ENCODE measurements at regions of chr7 and their contacts with region 1.

Region 1: DNA sequence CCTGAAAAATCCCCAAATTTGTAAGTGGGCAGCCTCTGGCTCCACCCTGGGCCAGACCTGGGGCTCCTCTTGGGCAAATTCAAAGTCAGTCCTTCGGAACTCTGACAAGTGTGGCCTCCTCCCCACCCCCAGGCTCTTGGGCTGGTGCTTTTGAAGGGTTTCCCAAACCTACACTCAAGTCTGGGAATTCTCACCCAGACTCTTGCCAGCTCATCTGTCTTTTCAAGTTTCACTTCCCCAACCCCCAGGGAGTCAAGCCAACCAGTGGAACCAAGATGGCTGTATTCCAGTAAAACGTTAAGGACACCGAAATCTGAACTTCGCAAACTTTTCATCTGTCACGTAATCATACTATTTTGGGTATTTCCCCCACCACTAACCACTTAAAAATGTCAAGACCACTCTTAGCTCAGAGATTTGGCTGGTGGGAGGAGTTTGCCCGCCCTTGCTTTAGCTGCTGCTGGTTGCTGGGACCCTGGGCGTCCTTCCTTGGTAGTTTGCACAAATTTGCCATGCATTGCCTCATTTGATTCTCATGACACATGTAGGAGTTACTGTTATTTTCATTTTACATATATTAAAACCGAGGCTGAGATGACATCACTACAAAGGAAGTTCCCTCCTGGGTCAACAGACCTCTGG is 1.7 kb upstream of the MYO1G start:
- DNase-seq: peak; percentile 94
- ATAC-seq: peak; percentile 48
- H3K4me3 Mint-ChIP-seq: peak overlapping the region; percentile 99
- H3K27ac Mint-ChIP-seq: peak overlapping the region; percentile 99
- H3K4me1 Mint-ChIP-seq: peaks cover 68% of the 10 kb centered on the region
- H3K27me3 Mint-ChIP-seq: no peaks in the 10 kb centered on the region

Region 2: DNA sequence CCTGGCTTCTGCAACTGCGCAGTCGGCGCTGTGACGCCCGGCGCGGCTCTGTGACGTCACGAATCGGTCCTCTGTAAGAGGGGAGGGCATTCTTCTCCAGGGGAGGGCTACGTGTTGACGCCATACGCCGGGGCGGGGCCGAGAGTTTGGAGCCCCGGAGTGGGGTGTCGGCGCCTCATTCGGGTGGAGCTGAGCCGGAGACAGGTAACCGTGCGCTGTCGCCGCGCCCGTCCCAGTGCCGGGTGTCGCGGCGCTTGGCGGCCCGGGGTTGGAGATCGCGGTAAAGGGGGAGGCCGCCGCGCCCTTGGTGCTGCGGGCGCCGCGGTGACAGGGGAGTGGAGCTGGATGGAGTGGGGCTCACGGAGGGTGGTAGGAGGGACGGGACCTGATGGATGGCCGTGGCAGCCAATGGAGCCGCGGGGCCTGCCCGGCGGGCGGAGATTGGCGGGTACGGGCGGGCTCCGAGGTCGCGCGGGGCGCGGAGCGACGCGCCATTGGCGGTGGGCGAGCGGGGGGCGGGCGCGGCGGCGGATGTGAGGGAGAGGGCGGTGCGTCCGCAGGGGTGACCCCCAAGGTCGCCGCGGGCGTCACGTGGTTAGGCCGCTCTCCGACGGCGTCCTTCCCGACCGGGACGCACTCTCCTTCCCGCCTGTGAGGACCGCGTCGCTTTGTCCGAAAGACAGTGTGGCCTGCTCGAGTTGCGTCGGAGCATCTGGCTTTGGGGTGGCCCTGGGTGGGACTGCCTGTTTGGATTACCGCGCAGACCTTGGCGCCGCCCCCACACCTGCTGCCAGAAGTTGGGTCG is 373.9 kb before region 1 on chr7 and contains the start of gene OGDH:
- CTCF ChIA-PET with region 1: no interaction called
- POLR2A ChIA-PET with region 1: no interaction called
- intact Hi-C with region 1: loop called in 1 of 2 experiments (anchors 1 kb)
- DNase-seq: peak; percentile 100
- ATAC-seq: peak; percentile 98
- H3K4me3 Mint-ChIP-seq: peak within 1 kb of the TSS; percentile 92
- H3K27ac Mint-ChIP-seq: peak within 1 kb of the TSS; percentile 97
- H3K4me1 Mint-ChIP-seq: peaks cover 33% of the 10 kb centered on the region
- H3K27me3 Mint-ChIP-seq: no peaks in the 10 kb centered on the region
- total RNA-seq, gene OGDH: 80.3 to 90.1 TPM

Region 3: DNA sequence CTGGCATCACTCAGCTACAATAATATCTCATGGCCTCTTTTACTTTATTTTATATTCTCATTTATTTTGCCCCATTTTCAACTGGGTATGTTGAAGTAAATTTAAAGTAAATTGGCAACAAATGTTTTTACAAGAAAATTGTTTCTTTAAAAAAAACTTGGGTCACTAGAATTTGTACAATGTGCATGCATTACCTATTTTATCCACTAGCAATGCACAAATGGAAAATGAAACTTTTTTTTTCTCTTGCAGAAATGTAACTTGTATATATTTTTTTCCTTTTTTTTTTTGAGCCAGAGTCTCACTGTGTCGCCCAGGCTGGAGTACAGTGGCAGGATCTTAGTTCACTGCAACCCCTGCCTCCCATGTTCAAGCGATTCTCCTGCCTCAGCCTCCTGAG is 122.4 kb before region 1 on chr7:
- CTCF ChIA-PET with region 1: no interaction called
- POLR2A ChIA-PET with region 1: no interaction called
- intact Hi-C with region 1: loop called in 1 of 2 experiments (anchors 1 kb)
- DNase-seq: no peak
- ATAC-seq: no peak
- H3K4me3 Mint-ChIP-seq: no peak overlapping the region
- H3K27ac Mint-ChIP-seq: no peak overlapping the region
- H3K4me1 Mint-ChIP-seq: peaks cover 18% of the 10 kb centered on the region
- H3K27me3 Mint-ChIP-seq: no peaks in the 10 kb centered on the region

Region 4: GRCh38 chr7:44966731-44967538 is 13.6 kb before region 1 on chr7:
- CTCF ChIA-PET with region 1: no interaction called
- POLR2A ChIA-PET with region 1: no interaction called
- intact Hi-C with region 1: no loop called
- DNase-seq: peak; percentile 27
- ATAC-seq: no peak
- H3K4me3 Mint-ChIP-seq: no peak overlapping the region
- H3K27ac Mint-ChIP-seq: peak overlapping the region; percentile 19
- H3K4me1 Mint-ChIP-seq: peaks cover 5% of the 10 kb centered on the region
- H3K27me3 Mint-ChIP-seq: no peaks in the 10 kb centered on the region

Region 5: DNA sequence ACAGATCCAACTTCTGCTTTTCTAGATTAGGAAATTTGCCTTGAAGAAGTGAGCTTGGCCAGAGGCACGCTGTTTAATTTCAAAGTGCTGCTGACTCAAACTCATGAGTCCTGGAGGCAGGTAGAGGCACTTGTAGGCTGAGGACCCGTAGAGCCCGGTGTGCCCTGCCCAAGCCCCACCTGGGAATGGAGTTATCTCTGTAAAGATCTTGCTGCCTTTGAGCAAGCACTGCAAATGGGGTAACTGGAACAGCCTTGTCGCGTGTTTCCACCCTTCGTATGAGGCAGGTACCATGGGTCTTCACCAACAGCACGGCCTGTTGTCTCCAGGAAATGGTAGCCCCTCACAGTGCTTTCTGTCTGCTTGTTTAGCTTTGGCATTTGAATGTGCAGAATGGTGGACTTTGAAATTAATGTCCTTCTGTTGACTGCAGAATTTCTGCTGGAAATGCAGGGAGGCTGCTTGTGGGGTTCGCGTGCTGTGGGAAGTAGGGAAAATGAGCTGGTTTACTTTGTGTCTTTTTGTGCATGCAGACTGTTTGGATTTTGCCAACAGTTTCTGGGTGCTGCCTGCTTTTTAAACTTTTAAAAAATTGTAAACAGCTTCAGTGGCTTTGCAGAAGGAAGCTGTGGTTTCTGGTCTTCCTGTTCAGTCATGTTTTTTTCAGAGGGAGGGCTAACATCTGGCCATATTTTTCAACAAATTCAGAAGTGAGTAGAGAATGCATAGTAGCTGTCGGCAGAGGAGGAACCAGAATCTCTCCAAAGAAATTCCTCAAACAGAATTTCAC is 46.7 kb after region 1 on chr7:
- CTCF ChIA-PET with region 1: interaction called, 5 read pairs
- POLR2A ChIA-PET with region 1: interaction called, 9 read pairs
- intact Hi-C with region 1: loop called (anchors 2 kb)
- DNase-seq: peak; percentile 37
- ATAC-seq: peak; percentile 26
- H3K4me3 Mint-ChIP-seq: peak overlapping the region; percentile 74
- H3K27ac Mint-ChIP-seq: peak overlapping the region; percentile 91
- H3K4me1 Mint-ChIP-seq: peaks cover 78% of the 10 kb centered on the region
- H3K27me3 Mint-ChIP-seq: no peaks in the 10 kb centered on the region

Region 6: GRCh38 chr7:45136106-45137060 is 155.9 kb after region 1 on chr7:
- CTCF ChIA-PET with region 1: interaction called, 20 read pairs
- POLR2A ChIA-PET with region 1: interaction called, 3 read pairs
- intact Hi-C with region 1: loop called in 1 of 2 experiments (anchors 5 kb)
- DNase-seq: peak; percentile 82
- ATAC-seq: peak; percentile 91
- H3K4me3 Mint-ChIP-seq: no peak overlapping the region
- H3K27ac Mint-ChIP-seq: no peak overlapping the region
- H3K4me1 Mint-ChIP-seq: peaks cover 11% of the 10 kb centered on the region
- H3K27me3 Mint-ChIP-seq: no peaks in the 10 kb centered on the region